Psoas muscle (tissue), 8 donors: ENCODE measurements at regions of chr11 and their contacts with region 1.

Region 1: DNA sequence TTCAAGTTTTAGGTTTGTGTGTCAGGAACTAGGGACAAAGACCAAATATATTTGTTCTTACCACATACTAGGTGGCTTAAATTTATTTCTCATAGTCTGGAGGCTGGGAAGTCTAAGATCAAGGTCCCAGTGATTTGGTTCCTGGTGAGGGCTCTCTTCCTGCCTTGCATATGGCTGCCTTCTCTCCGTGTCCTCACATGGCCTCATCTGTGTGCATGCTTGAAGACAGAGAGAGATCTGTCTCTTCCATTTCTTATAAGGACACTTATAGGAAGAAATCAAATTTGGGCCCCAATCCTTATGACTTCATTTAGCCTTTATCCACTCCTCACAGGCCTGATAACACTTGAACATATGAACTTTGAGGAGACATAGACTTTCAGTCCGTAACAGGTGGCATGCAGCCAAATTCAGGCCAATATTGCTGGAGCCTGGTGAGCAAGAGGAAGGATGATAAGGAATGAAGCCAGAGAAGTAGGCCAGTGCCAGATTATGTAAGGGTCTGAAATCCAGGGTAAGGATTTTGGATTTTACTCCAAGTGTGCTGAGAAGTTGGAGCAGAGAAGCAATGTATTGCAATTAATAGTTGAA is 35.1 kb downstream of the TTC17 start:
- DNase-seq: no peak
- ATAC-seq: no peak
- H3K4me3 ChIP-seq: no peak overlapping the region
- H3K27ac ChIP-seq: no peak overlapping the region
- H3K4me1 ChIP-seq: no peaks in the 10 kb centered on the region
- H3K27me3 ChIP-seq: no peaks in the 10 kb centered on the region
- CTCF ChIP-seq: no peak

Region 2: GRCh38 chr11:43408277-43408676 is 14.4 kb after region 1 on chr11:
- intact Hi-C with region 1: loop called in 1 of 2 experiments (anchors 1 kb)
- DNase-seq: no peak
- ATAC-seq: no peak
- H3K4me3 ChIP-seq: no peak overlapping the region
- H3K27ac ChIP-seq: no peak overlapping the region
- H3K4me1 ChIP-seq: no peaks in the 10 kb centered on the region
- H3K27me3 ChIP-seq: no peaks in the 10 kb centered on the region
- CTCF ChIP-seq: no peak